ENCODE measurements at regions of chr1 and their contacts with region 1.

Region 1: DNA sequence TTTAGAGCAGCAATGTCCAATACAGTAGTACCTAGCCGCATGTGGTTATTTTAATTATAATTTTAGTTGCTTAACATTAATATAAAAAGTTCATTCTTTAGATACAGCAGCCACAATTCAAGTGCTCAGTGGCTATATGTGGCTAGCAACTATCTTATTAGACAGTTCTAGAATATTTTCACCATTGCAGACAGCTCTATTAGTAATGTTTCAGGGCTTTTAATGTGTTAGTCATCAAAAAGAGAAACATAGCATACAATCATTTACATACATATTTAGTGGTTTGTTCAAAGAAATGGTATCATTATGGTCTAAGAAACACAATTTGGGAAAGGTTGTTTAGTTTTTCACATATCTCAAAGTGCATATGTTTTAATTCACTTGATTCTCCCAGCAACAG is 66.6 kb upstream of the DYNLT5 start:
- DNase-seq: no peak
- ATAC-seq: no peak
- H3K4me3 ChIP-seq: no peak overlapping the region
- H3K27ac ChIP-seq: peak overlapping the region in 1 of 2 donors; percentile 93
- H3K4me1 ChIP-seq: peaks cover 6 to 8% of the 10 kb centered on the region in 2 donors
- H3K27me3 ChIP-seq: no peaks in the 10 kb centered on the region

Region 2: DNA sequence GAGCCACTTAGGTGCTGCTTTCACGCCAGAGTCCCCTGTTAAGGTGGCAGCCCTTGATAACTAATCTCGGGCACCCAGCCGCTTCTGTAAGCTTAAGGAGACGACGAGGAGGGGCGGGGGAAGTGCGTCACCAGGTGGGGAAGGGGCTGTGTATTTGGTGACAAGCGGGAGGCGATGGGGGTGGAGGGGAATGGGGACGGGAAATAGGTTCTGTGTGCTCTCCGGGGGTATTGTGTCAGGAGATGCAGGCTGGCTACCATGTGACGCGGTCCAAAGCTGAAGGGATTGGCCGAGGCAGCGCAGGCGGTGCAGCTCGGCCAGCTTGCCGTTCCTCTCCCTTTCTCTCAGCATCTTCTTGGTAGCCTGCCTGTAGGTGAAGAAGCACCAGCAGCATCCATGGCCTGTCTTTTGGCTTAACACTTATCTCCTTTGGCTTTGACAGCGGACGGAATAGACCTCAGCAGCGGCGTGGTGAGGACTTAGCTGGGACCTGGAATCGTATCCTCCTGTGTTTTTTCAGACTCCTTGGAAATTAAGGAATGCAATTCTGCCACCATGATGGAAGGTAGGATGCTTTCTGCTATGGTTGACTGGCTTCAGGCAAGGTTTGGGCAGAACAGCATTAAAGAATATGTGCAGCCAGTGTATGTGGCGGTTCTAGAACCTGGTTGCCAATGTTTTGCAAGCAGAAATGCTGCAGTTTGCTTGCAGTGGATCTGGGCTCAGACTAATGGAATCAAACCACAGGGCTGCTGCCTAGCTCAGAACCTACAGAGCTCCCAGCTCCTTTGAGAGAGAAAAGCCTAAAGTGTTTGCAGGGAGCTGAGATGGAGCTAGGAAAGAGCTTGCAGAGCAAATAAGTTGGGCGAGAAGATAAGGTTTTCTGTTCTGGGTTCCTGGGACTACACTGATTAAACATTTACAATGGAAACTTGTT is 151.6 kb before region 1 on chr1 and contains the start of gene SGIP1:
- intact Hi-C with region 1: loop called in 1 of 2 experiments (anchors 5 kb)
- DNase-seq: peak; percentile 81 to 86
- ATAC-seq: peak; percentile 91
- H3K4me3 ChIP-seq: peak within 1 kb of the TSS; percentile 55 to 80
- H3K27ac ChIP-seq: peak within 1 kb of the TSS; percentile 87 to 94
- H3K4me1 ChIP-seq: peaks cover 2 to 3% of the 10 kb centered on the region in 2 donors
- H3K27me3 ChIP-seq: no peaks in the 10 kb centered on the region
- total RNA-seq, gene SGIP1: 51.8 to 73.2 TPM

Region 3: GRCh38 chr1:66607458-66607857 is 78.2 kb before region 1 on chr1:
- intact Hi-C with region 1: no loop called
- DNase-seq: no peak
- ATAC-seq: no peak
- H3K4me3 ChIP-seq: no peak overlapping the region
- H3K27ac ChIP-seq: no peak overlapping the region
- H3K4me1 ChIP-seq: peaks cover 0 to 4% of the 10 kb centered on the region in 2 donors
- H3K27me3 ChIP-seq: no peaks in the 10 kb centered on the region

Region 4: GRCh38 chr1:66867501-66867900 is 181.8 kb after region 1 on chr1:
- intact Hi-C with region 1: no loop called
- DNase-seq: no peak
- ATAC-seq: no peak
- H3K4me3 ChIP-seq: no peak overlapping the region
- H3K27ac ChIP-seq: no peak overlapping the region
- H3K4me1 ChIP-seq: no peaks in the 10 kb centered on the region
- H3K27me3 ChIP-seq: no peaks in the 10 kb centered on the region

Measured in aorta (tissue), 5 donors.